Heart left ventricle (tissue), 16 donors: ENCODE measurements at regions of chr18 and their contacts with region 1.

Region 1: GRCh38 chr18:22983175-22983574 is 50.0 kb downstream of the RBBP8 start:
- DNase-seq: no peak
- ATAC-seq: no peak
- H3K4me3 ChIP-seq: no peak overlapping the region
- H3K27ac ChIP-seq: no peak overlapping the region
- H3K4me1 ChIP-seq: peaks cover 0 to 12% (median 0%) of the 10 kb centered on the region in 12 donors
- H3K27me3 ChIP-seq: no peaks in the 10 kb centered on the region
- CTCF ChIP-seq: peak; percentile 38 to 67 (median 54)
- POLR2A ChIP-seq: no peak

Region 2: GRCh38 chr18:22570492-22570891 is 412.7 kb before region 1 on chr18:
- intact Hi-C with region 1: loop called in 1 of 10 experiments (anchors 10 kb)
- DNase-seq: no peak
- ATAC-seq: no peak
- H3K4me3 ChIP-seq: no peak overlapping the region
- H3K27ac ChIP-seq: no peak overlapping the region
- H3K4me1 ChIP-seq: peaks cover 0 to 4% (median 0%) of the 10 kb centered on the region in 12 donors
- H3K27me3 ChIP-seq: no peaks in the 10 kb centered on the region
- CTCF ChIP-seq: no peak
- POLR2A ChIP-seq: no peak

Region 3: DNA sequence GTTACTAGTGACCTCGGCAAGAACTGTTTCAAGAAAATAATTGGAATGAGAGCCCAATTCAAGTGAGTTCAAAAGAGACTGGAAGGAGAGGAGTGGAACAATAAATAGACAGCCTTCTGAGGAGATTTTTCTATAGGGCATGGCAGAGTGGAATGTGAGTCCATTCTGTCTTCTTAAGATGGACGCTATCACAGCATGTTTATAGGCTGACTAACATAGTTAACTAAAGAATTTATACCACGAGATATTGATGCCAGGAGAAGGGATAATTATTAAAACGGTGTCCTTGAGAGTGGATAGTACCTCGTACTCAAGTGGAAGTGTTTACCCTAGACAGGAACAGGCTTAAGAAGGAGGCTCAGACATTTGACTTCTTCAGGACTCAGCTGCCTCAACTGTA is 193.6 kb before region 1 on chr18:
- intact Hi-C with region 1: loop called in 1 of 10 experiments (anchors 10 kb)
- DNase-seq: no peak
- ATAC-seq: no peak
- H3K4me3 ChIP-seq: no peak overlapping the region
- H3K27ac ChIP-seq: no peak overlapping the region
- H3K4me1 ChIP-seq: no peaks in the 10 kb centered on the region
- H3K27me3 ChIP-seq: no peaks in the 10 kb centered on the region
- CTCF ChIP-seq: no peak
- POLR2A ChIP-seq: no peak

Region 4: GRCh38 chr18:22800551-22800951 is 182.6 kb before region 1 on chr18:
- intact Hi-C with region 1: loop called in 3 of 10 experiments (anchors 5 to 10 kb)
- DNase-seq: no peak
- ATAC-seq: peak; percentile 44 to 61 (median 54)
- H3K4me3 ChIP-seq: no peak overlapping the region
- H3K27ac ChIP-seq: peak overlapping the region in 5 of 12 donors; percentile 1 to 54 (median 29)
- H3K4me1 ChIP-seq: peaks cover 0 to 10% (median 0%) of the 10 kb centered on the region in 12 donors
- H3K27me3 ChIP-seq: no peaks in the 10 kb centered on the region
- CTCF ChIP-seq: no peak
- POLR2A ChIP-seq: no peak

Region 5: DNA sequence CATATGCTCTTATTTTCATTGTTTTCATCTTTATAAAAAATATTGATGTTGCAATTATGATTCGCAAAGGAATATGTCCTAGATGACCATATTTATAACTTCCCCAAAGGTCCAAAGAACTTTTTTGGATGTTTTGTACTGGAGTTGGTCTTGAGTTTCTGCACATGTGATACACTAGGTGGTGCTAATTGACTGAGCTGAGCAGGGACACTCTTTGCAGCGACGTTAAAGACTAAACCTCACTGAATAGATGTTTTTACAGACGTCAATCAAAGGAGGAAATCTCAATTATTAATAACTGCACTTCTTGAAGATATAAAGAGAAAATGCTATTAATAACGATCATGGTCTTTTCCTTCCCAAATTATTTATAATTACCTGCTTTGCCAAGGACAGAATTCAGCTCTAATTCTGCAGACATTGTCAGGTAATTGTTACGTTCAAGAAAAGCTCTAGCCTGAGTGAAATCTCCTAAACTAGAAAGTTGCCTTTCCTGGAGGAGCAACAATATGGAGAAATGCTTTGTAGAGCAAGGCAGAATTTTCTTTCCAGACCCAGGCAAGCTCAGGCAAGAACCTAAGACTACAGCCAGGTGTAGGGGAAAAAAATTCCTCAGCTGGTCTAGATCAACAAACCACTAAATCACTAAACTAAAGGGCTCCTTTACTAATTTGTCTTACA is 169.4 kb before region 1 on chr18:
- intact Hi-C with region 1: loop called in 8 of 10 experiments (anchors 2 to 10 kb)
- DNase-seq: no peak
- ATAC-seq: peak in 3 of 4 donors; percentile 49 to 55 (median 54)
- H3K4me3 ChIP-seq: no peak overlapping the region
- H3K27ac ChIP-seq: no peak overlapping the region
- H3K4me1 ChIP-seq: no peaks in the 10 kb centered on the region
- H3K27me3 ChIP-seq: peaks cover 0 to 9% (median 0%) of the 10 kb centered on the region in 9 donors
- CTCF ChIP-seq: peak; percentile 22 to 68 (median 39)
- POLR2A ChIP-seq: no peak

Region 6: DNA sequence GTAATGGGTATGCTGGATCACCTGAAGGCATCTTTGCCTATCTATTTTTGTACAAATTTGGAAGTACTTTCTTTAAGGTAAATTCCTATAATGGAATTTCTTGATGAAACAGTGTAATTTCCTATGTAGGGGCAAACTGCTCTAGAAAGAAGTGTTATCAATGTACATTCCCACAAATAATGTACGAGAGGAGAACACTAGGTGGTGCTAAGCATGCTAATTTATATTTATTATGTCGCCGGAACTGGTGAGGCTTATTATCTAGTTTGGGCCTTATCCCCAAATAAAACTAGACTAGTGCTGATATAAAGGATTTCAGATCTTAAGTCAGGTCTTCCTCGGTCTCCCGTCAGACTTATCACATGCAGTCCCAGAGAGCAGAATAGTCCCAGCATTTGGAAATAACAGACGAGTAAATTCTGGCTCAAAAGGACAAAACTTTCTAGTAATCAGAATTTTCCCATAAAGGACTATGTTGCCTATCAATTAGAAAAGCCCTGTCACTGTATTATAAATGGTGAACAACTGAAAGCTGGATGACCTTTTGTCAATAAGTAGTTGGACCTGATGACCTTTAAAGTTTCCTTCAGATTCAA is 137.0 kb before region 1 on chr18:
- intact Hi-C with region 1: loop called in 5 of 10 experiments (anchors 5 to 10 kb)
- DNase-seq: no peak
- ATAC-seq: no peak
- H3K4me3 ChIP-seq: no peak overlapping the region
- H3K27ac ChIP-seq: no peak overlapping the region
- H3K4me1 ChIP-seq: peaks cover 0 to 3% (median 0%) of the 10 kb centered on the region in 12 donors
- H3K27me3 ChIP-seq: no peaks in the 10 kb centered on the region
- CTCF ChIP-seq: peak in 11 of 12 donors; percentile 12 to 60 (median 33)
- POLR2A ChIP-seq: no peak

Region 7: GRCh38 chr18:22933206-22933957 is 49.8 kb before region 1 on chr18 and contains the start of gene RBBP8:
- intact Hi-C with region 1: loop called in 9 of 10 experiments (anchors 2 to 10 kb)
- DNase-seq: peak; percentile 87 to 93 (median 88)
- ATAC-seq: peak; percentile 92 to 99 (median 98)
- H3K4me3 ChIP-seq: peak within 1 kb of the TSS; percentile 68 to 93 (median 78)
- H3K27ac ChIP-seq: peak within 1 kb of the TSS; percentile 83 to 99 (median 96)
- H3K4me1 ChIP-seq: peaks cover 0 to 18% (median 5%) of the 10 kb centered on the region in 12 donors
- H3K27me3 ChIP-seq: no peaks in the 10 kb centered on the region
- CTCF ChIP-seq: no peak
- POLR2A ChIP-seq: peak in 1 of 2 donors; percentile 63
- total RNA-seq, gene RBBP8: 5.1 to 12.2 (median 8.6) TPM

Region 8: GRCh38 chr18:23020555-23021294 is 37.5 kb after region 1 on chr18:
- intact Hi-C with region 1: no loop called
- DNase-seq: no peak
- ATAC-seq: no peak
- H3K4me3 ChIP-seq: peak overlapping the region in 1 of 12 donors; percentile 10
- H3K27ac ChIP-seq: no peak overlapping the region
- H3K4me1 ChIP-seq: peaks cover 0 to 12% (median 0%) of the 10 kb centered on the region in 12 donors
- H3K27me3 ChIP-seq: no peaks in the 10 kb centered on the region
- CTCF ChIP-seq: no peak
- POLR2A ChIP-seq: no peak